CD8-positive, alpha-beta T cell (primary cell): ENCODE measurements at regions of chr21 and their contacts with region 1.

Region 1: DNA sequence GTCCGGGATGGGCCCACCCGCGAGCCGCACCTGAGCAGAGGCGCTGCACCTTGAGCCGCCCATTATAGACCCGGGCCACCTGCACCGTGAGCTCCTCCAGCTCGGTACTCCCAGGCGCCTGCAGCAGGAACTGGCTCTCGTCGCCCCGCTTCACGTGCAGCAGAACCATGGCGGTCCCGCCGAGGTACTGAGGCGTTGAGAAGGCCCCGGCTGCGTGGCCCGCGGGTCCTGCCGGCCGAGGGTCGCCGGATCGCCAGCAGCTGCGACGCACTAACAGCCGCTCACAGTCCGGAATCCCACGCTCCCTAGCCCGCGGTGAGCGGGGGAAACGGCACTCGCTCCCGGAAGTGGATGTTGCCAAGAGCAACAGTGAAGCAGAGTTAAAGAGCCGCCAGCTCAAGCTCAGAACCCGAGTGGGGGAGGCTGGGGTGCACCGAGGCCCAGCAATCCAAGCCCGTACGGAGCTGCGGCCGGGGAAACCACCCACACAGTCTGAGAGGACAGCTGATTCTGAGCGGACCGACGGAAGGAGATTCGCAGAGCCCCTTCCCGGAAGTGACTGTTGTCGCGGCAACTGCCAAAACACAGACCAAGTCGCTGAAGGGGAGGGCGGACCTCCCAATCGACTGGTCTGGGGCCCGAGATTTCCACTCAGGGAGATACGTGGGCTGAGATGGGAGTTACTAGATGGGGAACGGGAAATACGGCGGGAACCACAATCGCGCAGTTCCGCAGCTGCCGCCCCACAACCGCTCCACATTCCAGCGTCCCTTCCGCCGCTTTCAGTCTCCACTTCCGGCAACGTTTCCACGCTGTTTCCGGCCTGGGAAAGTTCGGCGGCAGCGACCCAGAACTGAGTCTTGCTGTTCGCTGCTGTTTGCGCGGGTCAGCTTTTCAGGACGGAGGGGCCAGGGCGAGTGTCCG is at the start of gene CFAP298:
- DNase-seq: peak; percentile 76 to 98 (median 88)
- ATAC-seq: peak; percentile 91
- H3K4me3 ChIP-seq: peak within 1 kb of the TSS; percentile 65 to 74
- H3K4me3 Mint-ChIP-seq: peak within 1 kb of the TSS; percentile 96
- H3K27ac ChIP-seq: peak within 1 kb of the TSS; percentile 79 to 96
- H3K27ac Mint-ChIP-seq: peak within 1 kb of the TSS; percentile 97
- H3K4me1 ChIP-seq: peaks cover 21% of the 10 kb centered on the region
- H3K4me1 Mint-ChIP-seq: peaks cover 27% of the 10 kb centered on the region
- H3K27me3 ChIP-seq: no peaks in the 10 kb centered on the region
- H3K27me3 Mint-ChIP-seq: no peaks in the 10 kb centered on the region
- CTCF ChIP-seq: no peak
- total RNA-seq, gene CFAP298: 7.5 to 9.1 TPM

Region 2: GRCh38 chr21:31731802-31732596 is 880.3 kb before region 1 on chr21 and contains the start of gene SCAF4:
- CTCF ChIA-PET with region 1: no interaction called
- POLR2A ChIA-PET with region 1: no interaction called
- intact Hi-C with region 1: loop called in 1 of 2 experiments (anchors 5 kb)
- DNase-seq: peak; percentile 58 to 89 (median 74)
- ATAC-seq: peak; percentile 87
- H3K4me3 ChIP-seq: peak within 1 kb of the TSS; percentile 73 to 93
- H3K4me3 Mint-ChIP-seq: peak within 1 kb of the TSS; percentile 90
- H3K27ac ChIP-seq: peak within 1 kb of the TSS; percentile 82 to 83
- H3K27ac Mint-ChIP-seq: peak within 1 kb of the TSS; percentile 84
- H3K4me1 ChIP-seq: peaks cover 50% of the 10 kb centered on the region
- H3K4me1 Mint-ChIP-seq: peaks cover 14% of the 10 kb centered on the region
- H3K27me3 ChIP-seq: no peaks in the 10 kb centered on the region
- H3K27me3 Mint-ChIP-seq: no peaks in the 10 kb centered on the region
- CTCF ChIP-seq: no peak
- total RNA-seq, gene SCAF4: 53.0 to 53.4 TPM

Region 3: GRCh38 chr21:32392880-32393676 is 219.3 kb before region 1 on chr21 and contains the start of gene URB1:
- CTCF ChIA-PET with region 1: no interaction called
- POLR2A ChIA-PET with region 1: interaction called, 8 read pairs
- intact Hi-C with region 1: loop called (anchors 1 kb)
- DNase-seq: peak; percentile 89 to 98 (median 94)
- ATAC-seq: peak; percentile 97
- H3K4me3 ChIP-seq: peak within 1 kb of the TSS; percentile 94 to 98
- H3K4me3 Mint-ChIP-seq: peak within 1 kb of the TSS; percentile 89
- H3K27ac ChIP-seq: peak within 1 kb of the TSS; percentile 65 to 83
- H3K27ac Mint-ChIP-seq: peak within 1 kb of the TSS; percentile 80
- H3K4me1 ChIP-seq: peaks cover 13% of the 10 kb centered on the region
- H3K4me1 Mint-ChIP-seq: peaks cover 50% of the 10 kb centered on the region
- H3K27me3 ChIP-seq: no peaks in the 10 kb centered on the region
- H3K27me3 Mint-ChIP-seq: peaks cover 7% of the 10 kb centered on the region
- CTCF ChIP-seq: no peak
- total RNA-seq, gene URB1: 5.4 to 5.9 TPM

Region 4: GRCh38 chr21:32569261-32570230 is 42.8 kb before region 1 on chr21:
- CTCF ChIA-PET with region 1: interaction called, 3 read pairs
- POLR2A ChIA-PET with region 1: interaction called, 7 read pairs
- intact Hi-C with region 1: loop called in 1 of 2 experiments (anchors 1 kb)
- DNase-seq: peak; percentile 67 to 93 (median 84)
- ATAC-seq: peak; percentile 88
- H3K4me3 ChIP-seq: peak overlapping the region; percentile 64 to 78
- H3K4me3 Mint-ChIP-seq: peak overlapping the region; percentile 90
- H3K27ac ChIP-seq: peak overlapping the region; percentile 46 to 63
- H3K27ac Mint-ChIP-seq: peak overlapping the region; percentile 91
- H3K4me1 ChIP-seq: peaks cover 18% of the 10 kb centered on the region
- H3K4me1 Mint-ChIP-seq: peaks cover 25% of the 10 kb centered on the region
- H3K27me3 ChIP-seq: no peaks in the 10 kb centered on the region
- H3K27me3 Mint-ChIP-seq: no peaks in the 10 kb centered on the region
- CTCF ChIP-seq: peak; percentile 97

Region 5: DNA sequence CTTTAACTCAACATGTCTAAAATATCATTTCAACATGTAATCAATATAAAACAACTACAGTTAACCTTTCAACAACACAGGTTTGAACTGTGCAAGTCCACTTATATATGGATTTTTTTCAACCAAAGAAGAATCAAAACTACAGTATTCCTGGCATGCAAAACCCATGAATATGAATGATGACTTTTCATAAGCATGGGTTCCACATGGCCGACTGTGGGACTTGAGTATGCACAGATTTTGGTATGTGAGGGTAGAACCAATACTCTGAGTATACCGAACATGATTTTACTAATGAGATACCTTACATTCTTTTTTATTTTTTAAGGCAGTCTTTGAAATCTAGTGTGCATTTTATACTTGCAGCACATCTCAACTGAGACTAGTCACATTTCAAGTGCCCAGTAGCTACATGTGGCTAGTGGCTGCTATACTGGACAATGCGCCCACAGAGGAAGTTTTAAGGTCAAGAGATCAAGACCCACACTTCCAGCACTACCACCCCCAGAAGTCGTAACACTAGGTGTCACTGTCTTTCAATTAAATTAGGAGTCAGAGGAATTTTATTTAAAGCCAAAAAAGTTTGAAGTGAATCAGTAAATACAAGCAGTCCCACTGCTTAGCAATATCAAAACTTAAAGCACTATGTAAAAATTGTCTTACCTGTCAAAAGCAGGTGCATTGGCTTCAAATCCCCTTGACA is 75.5 kb after region 1 on chr21:
- CTCF ChIA-PET with region 1: no interaction called
- POLR2A ChIA-PET with region 1: no interaction called
- intact Hi-C with region 1: no loop called
- DNase-seq: peak in 1 of 9 experiments; percentile 15
- ATAC-seq: no peak
- H3K4me3 ChIP-seq: no peak overlapping the region
- H3K4me3 Mint-ChIP-seq: no peak overlapping the region
- H3K27ac ChIP-seq: no peak overlapping the region
- H3K27ac Mint-ChIP-seq: no peak overlapping the region
- H3K4me1 ChIP-seq: no peaks in the 10 kb centered on the region
- H3K4me1 Mint-ChIP-seq: no peaks in the 10 kb centered on the region
- H3K27me3 ChIP-seq: no peaks in the 10 kb centered on the region
- H3K27me3 Mint-ChIP-seq: no peaks in the 10 kb centered on the region
- CTCF ChIP-seq: no peak

Region 6: DNA sequence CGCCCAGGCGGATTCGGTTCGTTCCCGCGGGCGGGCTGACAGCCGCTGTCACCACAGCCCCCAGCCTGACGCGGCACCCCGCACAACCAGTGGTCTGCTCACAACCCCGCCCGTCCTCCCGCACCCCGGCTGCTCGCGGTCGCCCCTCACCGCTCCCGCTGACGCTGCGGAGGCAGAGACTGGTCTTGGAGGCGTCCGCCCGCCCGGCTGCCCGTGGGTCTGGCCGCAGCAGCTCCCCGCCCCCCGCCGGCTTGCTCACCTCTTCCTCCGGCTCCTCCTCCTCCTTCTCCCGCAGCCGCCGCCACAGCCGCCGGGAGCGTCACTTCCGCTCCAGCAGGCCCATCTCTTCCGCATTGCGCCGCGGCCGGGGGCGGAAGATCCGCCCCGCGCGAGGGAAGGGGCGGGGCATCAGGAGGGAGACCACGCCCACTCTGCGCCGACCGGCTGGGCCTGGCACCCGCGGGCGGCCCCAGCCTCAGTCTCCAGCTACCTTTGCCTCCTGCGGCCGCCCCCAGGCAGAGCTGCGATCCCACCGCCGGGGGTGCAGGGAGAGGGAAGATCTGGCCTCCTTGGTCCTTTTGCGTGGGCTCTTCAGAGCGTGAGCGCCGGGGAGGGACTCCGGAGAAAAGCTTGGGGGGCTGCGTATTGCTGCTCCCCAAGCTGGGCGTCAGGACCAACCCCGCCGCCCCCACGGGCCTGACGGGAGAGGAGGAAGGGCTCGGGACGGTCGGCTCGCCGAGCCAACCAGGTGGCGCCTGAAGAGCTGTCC is 115.5 kb after region 1 on chr21 and contains the start of gene SYNJ1:
- CTCF ChIA-PET with region 1: no interaction called
- POLR2A ChIA-PET with region 1: interaction called, 10 read pairs
- intact Hi-C with region 1: loop called (anchors 1 to 5 kb)
- DNase-seq: peak; percentile 86 to 96 (median 93)
- ATAC-seq: peak; percentile 86
- H3K4me3 ChIP-seq: peak within 1 kb of the TSS; percentile 86 to 99
- H3K4me3 Mint-ChIP-seq: peak within 1 kb of the TSS; percentile 94
- H3K27ac ChIP-seq: peak within 1 kb of the TSS; percentile 76 to 82
- H3K27ac Mint-ChIP-seq: peak within 1 kb of the TSS; percentile 93
- H3K4me1 ChIP-seq: peaks cover 45% of the 10 kb centered on the region
- H3K4me1 Mint-ChIP-seq: peaks cover 61% of the 10 kb centered on the region
- H3K27me3 ChIP-seq: no peaks in the 10 kb centered on the region
- H3K27me3 Mint-ChIP-seq: no peaks in the 10 kb centered on the region
- CTCF ChIP-seq: no peak
- total RNA-seq, gene SYNJ1: 10.5 to 10.7 TPM

Region 7: GRCh38 chr21:33380483-33380998 is 768.2 kb after region 1 on chr21:
- CTCF ChIA-PET with region 1: no interaction called
- POLR2A ChIA-PET with region 1: no interaction called
- intact Hi-C with region 1: loop called in 1 of 2 experiments (anchors 10 kb)
- DNase-seq: peak; percentile 53 to 88 (median 82)
- ATAC-seq: peak; percentile 72
- H3K4me3 ChIP-seq: peak overlapping the region in 1 of 2 experiments; percentile 17
- H3K4me3 Mint-ChIP-seq: peak overlapping the region; percentile 60
- H3K27ac ChIP-seq: peak overlapping the region; percentile 7 to 49
- H3K27ac Mint-ChIP-seq: peak overlapping the region; percentile 93
- H3K4me1 ChIP-seq: peaks cover 61% of the 10 kb centered on the region
- H3K4me1 Mint-ChIP-seq: peaks cover 60% of the 10 kb centered on the region
- H3K27me3 ChIP-seq: peaks cover 0 to 18% of the 10 kb centered on the region in 2 experiments
- H3K27me3 Mint-ChIP-seq: peaks cover 3% of the 10 kb centered on the region
- CTCF ChIP-seq: no peak

Region 8: GRCh38 chr21:34614633-34615486 is 2002.5 kb after region 1 on chr21 and contains the start of gene RCAN1:
- CTCF ChIA-PET with region 1: no interaction called
- POLR2A ChIA-PET with region 1: no interaction called
- intact Hi-C with region 1: loop called in 1 of 2 experiments (anchors 10 kb)
- DNase-seq: peak; percentile 64 to 94 (median 85)
- ATAC-seq: peak; percentile 95
- H3K4me3 ChIP-seq: peak within 1 kb of the TSS; percentile 51 to 63
- H3K4me3 Mint-ChIP-seq: peak within 1 kb of the TSS; percentile 90
- H3K27ac ChIP-seq: peak within 1 kb of the TSS; percentile 41 to 68
- H3K27ac Mint-ChIP-seq: peak within 1 kb of the TSS; percentile 91
- H3K4me1 ChIP-seq: peaks cover 13% of the 10 kb centered on the region
- H3K4me1 Mint-ChIP-seq: peaks cover 21% of the 10 kb centered on the region
- H3K27me3 ChIP-seq: no peaks in the 10 kb centered on the region
- H3K27me3 Mint-ChIP-seq: no peaks in the 10 kb centered on the region
- CTCF ChIP-seq: no peak
- total RNA-seq, gene RCAN1: 0.73 to 1.0 TPM